BJ (cell line): ENCODE measurements at regions of chr19 and their contacts with region 1.

Region 1: DNA sequence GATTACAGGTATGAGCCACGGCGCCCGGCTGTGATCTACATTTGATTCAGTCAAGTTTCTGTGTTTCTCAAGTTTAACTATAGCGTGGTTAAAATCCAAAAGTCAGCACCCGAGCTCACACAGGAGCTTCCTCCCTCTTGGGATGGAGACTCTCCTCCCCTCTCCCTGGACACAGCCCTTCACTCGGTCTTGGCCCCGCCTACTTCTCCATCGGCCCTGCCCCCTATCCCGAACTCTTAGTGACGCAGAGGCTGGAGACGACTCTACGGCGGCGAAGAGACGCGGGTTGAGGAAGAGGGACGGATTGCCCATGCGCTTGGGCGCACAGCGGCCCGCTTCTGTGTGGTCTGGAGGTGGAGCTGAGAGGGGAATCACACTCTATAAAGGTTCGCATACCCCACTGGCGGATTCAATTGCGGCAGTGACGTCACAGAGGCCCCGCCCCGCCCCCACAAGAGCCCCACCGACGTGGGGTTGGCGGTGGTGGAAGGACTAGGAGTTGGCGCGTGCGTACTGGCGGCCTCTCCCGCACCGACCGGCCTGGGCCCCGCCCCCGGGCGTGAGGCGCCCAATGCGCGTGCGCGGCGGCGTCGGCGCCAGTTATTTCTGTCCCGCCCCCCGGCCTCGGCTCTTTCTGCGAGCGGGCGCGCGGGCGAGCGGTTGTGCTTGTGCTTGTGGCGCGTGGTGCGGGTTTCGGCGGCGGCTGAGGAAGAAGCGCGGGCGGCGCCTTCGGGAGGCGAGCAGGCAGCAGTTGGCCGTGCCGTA is at the start of gene TRIM28:
- DNase-seq: peak; percentile 97
- H3K4me3 ChIP-seq: peak within 1 kb of the TSS; percentile 96
- H3K27me3 ChIP-seq: peaks cover 10% of the 10 kb centered on the region
- CTCF ChIP-seq: no peak
- polyA plus RNA-seq, gene TRIM28: 210 and 476 TPM in 2 replicates

Region 2: DNA sequence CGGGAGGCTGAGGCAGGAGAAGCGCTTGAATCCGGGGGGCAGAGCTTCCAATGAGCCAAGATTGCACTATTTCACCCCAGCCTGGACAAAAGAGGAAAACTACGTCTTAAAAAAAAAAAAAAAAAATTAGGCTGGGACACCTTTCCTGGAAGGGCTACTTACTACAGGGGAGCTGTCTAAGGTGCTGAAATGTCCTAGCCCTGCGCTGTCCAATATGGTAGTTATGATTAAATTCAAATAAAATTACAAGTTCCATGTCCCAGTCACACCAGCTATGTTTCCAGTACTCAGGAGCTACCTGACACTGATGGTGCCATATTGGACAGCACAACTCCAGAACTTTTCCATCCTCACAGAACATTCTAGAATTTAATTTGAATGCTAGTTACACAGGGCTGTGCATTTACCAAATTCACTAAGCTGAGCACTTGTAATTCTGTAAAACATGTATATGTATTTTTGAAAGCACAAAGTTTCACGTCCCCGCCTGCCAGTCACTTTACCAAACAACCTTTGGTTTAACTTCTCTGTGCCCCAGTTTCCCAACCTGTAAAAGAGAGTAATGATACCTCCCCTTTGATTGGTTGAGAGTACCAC is 226.4 kb before region 1 on chr19:
- CTCF ChIA-PET with region 1: no interaction called
- POLR2A ChIA-PET with region 1: no interaction called
- DNase-seq: no peak
- H3K4me3 ChIP-seq: no peak overlapping the region
- H3K27me3 ChIP-seq: no peaks in the 10 kb centered on the region
- CTCF ChIP-seq: no peak

Region 3: GRCh38 chr19:58554494-58555368 is 10.7 kb after region 1 on chr19 and contains the start of gene CHMP2A:
- CTCF ChIA-PET with region 1: no interaction called
- POLR2A ChIA-PET with region 1: interaction called, 10 read pairs
- DNase-seq: peak; percentile 72
- H3K4me3 ChIP-seq: peak within 1 kb of the TSS; percentile 71
- H3K27me3 ChIP-seq: no peaks in the 10 kb centered on the region
- CTCF ChIP-seq: no peak
- polyA plus RNA-seq, gene CHMP2A: 153 and 174 TPM in 2 replicates

Region 4: DNA sequence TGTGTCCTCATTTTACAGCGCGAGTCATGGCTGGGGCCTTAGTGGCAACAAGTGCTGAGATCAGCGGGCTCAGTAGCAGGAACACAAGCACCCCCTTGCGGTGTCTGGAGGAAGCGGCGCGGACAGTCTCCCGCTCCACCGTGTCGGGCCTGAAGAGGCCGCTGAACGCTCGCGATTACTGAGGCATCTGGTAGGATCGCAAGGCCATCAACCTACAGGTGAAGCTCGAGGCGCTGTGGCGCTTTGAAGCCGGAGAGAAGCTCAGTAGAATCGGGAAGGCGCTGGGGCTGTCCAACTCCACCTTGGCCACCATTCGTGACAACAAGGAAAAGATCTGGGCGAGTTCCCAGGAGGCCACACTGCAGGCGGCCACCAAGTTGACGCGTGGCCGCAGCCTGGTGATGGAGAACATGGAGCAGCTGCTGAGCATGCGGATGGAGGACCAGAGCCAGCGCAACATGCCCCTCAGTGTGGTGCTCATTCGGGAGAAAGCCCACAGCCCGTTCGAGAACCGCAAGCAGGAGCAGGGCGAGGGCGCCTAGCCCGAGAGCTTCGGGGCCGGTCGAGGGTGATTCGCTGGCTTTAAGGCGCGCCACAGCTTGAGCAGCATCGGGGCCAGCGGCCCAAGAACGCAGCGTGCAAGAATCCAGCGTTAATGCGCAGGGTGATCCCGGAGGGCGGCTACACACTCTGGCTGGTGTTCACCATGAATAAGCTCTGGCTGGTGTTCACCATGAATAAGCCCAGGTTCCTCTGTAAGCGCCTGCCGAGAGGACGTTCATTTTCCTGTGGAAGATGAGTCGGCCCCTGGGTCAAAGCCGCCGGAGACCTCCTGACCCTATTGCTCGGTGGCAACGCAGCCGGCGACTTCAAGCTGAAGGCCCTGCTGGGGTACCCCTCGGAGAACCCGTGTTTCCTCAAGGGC is 37.5 kb after region 1 on chr19:
- CTCF ChIA-PET with region 1: no interaction called
- POLR2A ChIA-PET with region 1: no interaction called
- DNase-seq: peak; percentile 63
- H3K4me3 ChIP-seq: no peak overlapping the region
- H3K27me3 ChIP-seq: no peaks in the 10 kb centered on the region
- CTCF ChIP-seq: peak; percentile 99